Activated naive CD4-positive, alpha-beta T cell treated with anti-CD3 and anti-CD28 coated beads for 36 hours (primary cell): ENCODE measurements at regions of chr6 and their contacts with region 1.

Region 1: DNA sequence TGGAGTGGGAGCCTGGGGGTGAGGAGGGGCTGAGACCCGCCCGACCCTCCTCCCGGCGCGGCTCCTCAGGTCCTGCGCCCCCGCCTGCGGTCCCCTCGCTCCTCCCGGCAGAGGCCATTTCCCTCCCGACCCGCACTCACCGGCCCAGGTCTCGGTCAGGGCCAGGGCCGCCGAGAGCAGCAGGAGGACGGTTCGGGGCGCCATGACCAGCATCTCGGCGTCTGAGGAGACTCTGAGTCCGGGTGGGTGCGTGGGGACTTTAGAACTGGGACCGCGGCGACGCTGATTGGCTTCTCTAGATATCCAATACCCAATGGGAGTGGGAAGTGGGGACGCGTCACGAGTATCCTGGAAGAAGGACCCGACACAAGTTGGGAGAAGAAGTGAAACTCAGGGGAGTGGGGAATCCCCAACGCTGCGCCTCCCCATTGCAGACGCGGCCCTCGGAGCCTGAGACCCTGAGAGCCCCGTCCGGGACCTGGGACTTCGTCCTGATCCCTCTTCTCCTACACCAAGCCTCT is at the start of gene HLA-B:
- DNase-seq: peak; percentile 92
- H3K4me3 Mint-ChIP-seq: peak within 1 kb of the TSS; percentile 97
- H3K27ac Mint-ChIP-seq: peak within 1 kb of the TSS; percentile 100
- H3K4me1 Mint-ChIP-seq: peaks cover 54% of the 10 kb centered on the region
- H3K27me3 Mint-ChIP-seq: no peaks in the 10 kb centered on the region
- total RNA-seq, gene HLA-B: 3,225 to 3,295 TPM

Region 2: DNA sequence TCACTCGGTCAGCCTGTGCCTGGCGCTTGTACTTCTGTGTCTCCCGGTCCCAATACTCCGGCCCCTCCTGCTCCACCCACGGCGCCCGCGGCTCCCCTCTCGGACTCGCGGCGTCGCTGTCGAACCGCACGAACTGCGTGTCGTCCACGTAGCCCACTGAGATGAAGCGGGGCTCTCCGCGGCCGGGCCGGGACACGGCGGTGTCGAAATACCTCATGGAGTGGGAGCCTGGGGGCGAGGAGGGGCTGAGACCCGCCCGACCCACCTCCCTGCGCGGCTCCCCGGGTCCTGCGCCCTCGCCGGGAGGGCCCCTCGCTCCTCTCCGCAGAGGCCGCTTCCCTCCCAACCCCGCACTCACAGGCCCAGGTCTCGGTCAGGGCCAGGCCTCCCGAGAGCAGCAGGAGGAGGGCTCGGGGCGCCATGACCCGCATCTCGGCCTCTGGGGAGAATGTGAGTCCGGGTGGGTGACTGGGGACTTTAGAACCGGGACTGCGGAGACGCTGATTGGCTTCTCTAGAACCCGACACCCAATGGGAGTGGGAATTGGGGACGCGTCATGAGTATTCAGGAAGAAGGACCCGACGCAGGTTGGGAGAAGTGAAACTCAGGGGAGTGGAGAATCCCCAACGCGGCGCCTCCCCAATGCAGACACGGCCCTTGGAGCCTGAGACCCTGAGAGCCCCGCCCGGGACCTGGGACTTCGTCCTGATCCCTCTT is 85.2 kb before region 1 on chr6 and contains the start of gene HLA-C:
- CTCF ChIA-PET with region 1: no interaction called
- intact Hi-C with region 1: loop called (anchors 1 kb)
- DNase-seq: peak; percentile 96
- H3K4me3 Mint-ChIP-seq: peak within 1 kb of the TSS; percentile 98
- H3K27ac Mint-ChIP-seq: peak within 1 kb of the TSS; percentile 100
- H3K4me1 Mint-ChIP-seq: peaks cover 46% of the 10 kb centered on the region
- H3K27me3 Mint-ChIP-seq: peaks cover 4% of the 10 kb centered on the region
- total RNA-seq, gene HLA-C: 1,018 to 1,049 TPM